ENCODE measurements at regions of chr3 and their contacts with region 1.

Region 1: DNA sequence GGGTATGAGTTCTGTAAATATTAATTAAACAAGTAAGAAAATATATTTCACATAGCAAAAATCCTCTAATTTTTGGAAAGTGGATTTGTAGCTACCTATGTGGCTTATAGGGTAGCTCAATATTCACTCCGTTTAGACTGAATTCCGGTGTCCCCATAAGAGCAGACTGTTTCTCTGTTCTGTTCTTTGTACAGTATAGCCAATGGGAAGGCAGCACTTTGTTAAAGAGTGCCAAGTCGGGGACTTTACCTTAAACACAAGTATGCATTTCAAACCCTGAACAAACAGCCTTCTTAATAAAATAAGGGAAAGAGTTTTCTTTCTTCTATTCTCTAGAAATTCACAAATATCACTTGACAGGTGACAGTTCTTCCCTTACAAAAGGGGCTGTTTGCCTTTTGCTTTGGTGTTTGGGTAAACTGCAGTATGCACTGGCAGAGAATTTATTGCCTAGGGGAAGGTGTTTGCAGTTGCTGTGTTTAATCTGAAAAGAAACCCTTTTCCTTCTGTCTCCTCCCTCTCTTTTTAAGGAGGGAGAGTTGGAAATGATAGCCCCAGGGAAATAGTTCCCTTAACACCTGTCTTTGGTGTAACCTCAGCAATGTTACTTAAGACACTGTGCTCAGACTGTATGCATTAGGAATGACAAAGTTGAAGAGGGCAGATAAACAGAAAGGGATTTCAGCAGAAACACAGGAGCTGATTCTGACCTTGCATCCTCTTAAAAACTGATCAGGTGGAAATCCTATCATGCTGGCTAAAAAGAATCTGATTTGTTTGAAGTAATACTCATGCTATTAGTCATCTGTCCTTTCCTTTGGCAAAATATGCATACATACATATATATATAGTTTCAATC is 125.3 kb downstream of the TP63 start:
- DNase-seq: peak; percentile 58 to 100
- H3K4me3 ChIP-seq: no peak overlapping the region; the same call in 1 of the 2 replicates
- H3K27ac ChIP-seq: peak overlapping the region; percentile 93
- H3K4me1 ChIP-seq: peaks cover 40% of the 10 kb centered on the region
- H3K27me3 ChIP-seq: no peaks in the 10 kb centered on the region
- CTCF ChIP-seq: no peak

Region 2: GRCh38 chr3:189270248-189270832 is 486.1 kb before region 1 on chr3:
- CTCF ChIA-PET with region 1: interaction called, 3 read pairs
- POLR2A ChIA-PET with region 1: no interaction called
- intact Hi-C with region 1: loop called (anchors 1 kb)
- DNase-seq: peak; percentile 83 to 86
- H3K4me3 ChIP-seq: no peak overlapping the region
- H3K27ac ChIP-seq: no peak overlapping the region
- H3K4me1 ChIP-seq: no peaks in the 10 kb centered on the region
- H3K27me3 ChIP-seq: no peaks in the 10 kb centered on the region
- CTCF ChIP-seq: peak; percentile 78

Region 3: GRCh38 chr3:189355481-189356201 is 400.8 kb before region 1 on chr3:
- CTCF ChIA-PET with region 1: interaction called, 30 read pairs
- POLR2A ChIA-PET with region 1: no interaction called
- intact Hi-C with region 1: no loop called
- DNase-seq: peak in 1 of 2 experiments; percentile 44
- H3K4me3 ChIP-seq: no peak overlapping the region
- H3K27ac ChIP-seq: peak overlapping the region; percentile 57
- H3K4me1 ChIP-seq: peaks cover 33% of the 10 kb centered on the region
- H3K27me3 ChIP-seq: no peaks in the 10 kb centered on the region
- CTCF ChIP-seq: no peak

Region 4: DNA sequence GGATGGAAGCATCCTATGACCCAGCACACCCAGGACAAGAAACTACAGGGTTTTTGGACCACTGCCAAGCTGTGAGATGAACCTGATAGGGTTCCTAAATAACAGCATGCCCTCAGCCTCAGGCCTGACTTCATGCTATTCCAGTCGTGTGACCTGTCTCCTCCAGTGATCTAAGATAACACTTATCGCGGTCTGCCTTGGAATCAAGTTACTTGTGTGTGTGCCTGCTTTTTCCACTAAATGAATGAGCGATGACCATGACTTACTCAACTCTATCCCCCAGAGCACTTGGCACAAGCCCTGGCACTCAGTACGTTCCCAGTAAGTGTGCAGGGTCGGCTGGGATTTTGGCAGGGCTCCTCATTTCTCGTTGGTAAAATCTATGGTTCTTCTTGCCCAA is 297.9 kb before region 1 on chr3:
- CTCF ChIA-PET with region 1: no interaction called
- POLR2A ChIA-PET with region 1: no interaction called
- intact Hi-C with region 1: loop called (anchors 2 kb)
- DNase-seq: peak; percentile 84 to 86
- H3K4me3 ChIP-seq: no peak overlapping the region
- H3K27ac ChIP-seq: no peak overlapping the region
- H3K4me1 ChIP-seq: peaks cover 11% of the 10 kb centered on the region
- H3K27me3 ChIP-seq: no peaks in the 10 kb centered on the region
- CTCF ChIP-seq: no peak

Region 5: GRCh38 chr3:189573004-189573403 is 183.4 kb before region 1 on chr3:
- CTCF ChIA-PET with region 1: no interaction called
- POLR2A ChIA-PET with region 1: no interaction called
- intact Hi-C with region 1: loop called (anchors 2 kb)
- DNase-seq: peak; percentile 26 to 39
- H3K4me3 ChIP-seq: no peak overlapping the region
- H3K27ac ChIP-seq: peak overlapping the region; percentile 91
- H3K4me1 ChIP-seq: peaks cover 30% of the 10 kb centered on the region
- H3K27me3 ChIP-seq: no peaks in the 10 kb centered on the region
- CTCF ChIP-seq: no peak

Region 6: DNA sequence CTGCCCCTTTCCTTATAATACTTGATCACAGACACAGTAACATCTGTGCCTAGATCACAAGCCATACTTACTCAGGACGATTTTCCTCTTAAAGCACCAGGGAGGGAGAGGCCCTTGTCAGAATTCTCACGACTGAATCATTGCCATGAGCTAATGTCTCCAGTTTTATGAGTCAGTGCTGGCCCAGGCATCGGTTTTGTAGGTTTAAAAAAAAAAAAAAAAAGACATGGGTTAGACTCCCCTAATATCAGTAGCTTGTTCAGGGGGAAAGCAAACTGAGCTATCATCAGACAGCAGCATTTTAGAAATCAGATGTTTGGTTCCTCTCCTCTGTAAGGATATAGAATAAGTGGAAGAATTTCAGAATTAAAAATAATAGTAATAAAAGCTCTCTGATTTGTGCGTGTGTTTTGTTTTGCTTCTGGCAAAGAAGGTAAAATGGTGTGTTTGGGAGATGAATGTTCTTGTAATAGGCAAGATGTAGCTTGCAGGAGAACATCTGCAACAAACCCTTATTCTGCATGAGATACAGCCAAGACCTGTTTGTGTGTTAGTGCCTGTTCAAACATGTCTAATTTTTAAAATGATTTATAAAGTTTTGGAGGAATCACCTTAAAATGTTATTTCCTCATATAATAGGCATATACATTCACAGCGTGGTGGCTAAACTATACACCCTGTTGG is 68.3 kb after region 1 on chr3:
- CTCF ChIA-PET with region 1: no interaction called
- POLR2A ChIA-PET with region 1: interaction called, 11 read pairs
- intact Hi-C with region 1: no loop called
- DNase-seq: peak; percentile 36 to 68
- H3K4me3 ChIP-seq: no peak overlapping the region
- H3K27ac ChIP-seq: peak overlapping the region; percentile 45
- H3K4me1 ChIP-seq: peaks cover 14% of the 10 kb centered on the region; the same call in 1 of the 2 replicates
- H3K27me3 ChIP-seq: no peaks in the 10 kb centered on the region
- CTCF ChIP-seq: no peak